Activated B cell treated with CpG ODN at 0.5 μM for 24 hours (primary cell): ENCODE measurements at regions of chr6 and their contacts with region 1.

Region 1: GRCh38 chr6:29355603-29356002 is 13.1 kb downstream of the OR5V1 start:
- DNase-seq: no peak
- ATAC-seq: no peak
- H3K4me3 Mint-ChIP-seq: no peak overlapping the region
- H3K27ac Mint-ChIP-seq: no peak overlapping the region
- H3K4me1 Mint-ChIP-seq: no peaks in the 10 kb centered on the region
- H3K27me3 Mint-ChIP-seq: peaks cover 25% of the 10 kb centered on the region
- CTCF ChIP-seq: no peak

Region 2: DNA sequence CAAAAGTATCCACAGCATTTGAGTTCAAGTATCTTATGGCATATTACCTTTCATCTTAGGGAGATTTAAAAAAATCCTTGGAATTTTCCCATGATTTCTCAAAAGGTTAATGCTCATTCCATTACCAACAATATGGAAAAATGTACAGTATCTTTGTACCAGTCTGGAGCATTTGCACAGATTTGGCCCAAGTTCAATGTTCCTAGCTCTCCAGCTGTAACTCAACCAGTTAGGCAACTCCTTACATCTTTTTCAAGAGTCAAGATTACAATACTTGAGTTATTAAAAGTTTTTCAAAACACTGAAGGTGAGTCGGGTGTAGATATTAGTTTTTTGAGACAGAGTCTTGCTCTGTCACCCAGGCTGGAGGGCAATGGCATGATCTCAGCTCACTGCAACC is 183.9 kb before region 1 on chr6:
- CTCF ChIA-PET with region 1: no interaction called
- POLR2A ChIA-PET with region 1: no interaction called
- intact Hi-C with region 1: no loop called
- DNase-seq: no peak
- ATAC-seq: no peak
- H3K4me3 Mint-ChIP-seq: no peak overlapping the region
- H3K27ac Mint-ChIP-seq: no peak overlapping the region
- H3K4me1 Mint-ChIP-seq: no peaks in the 10 kb centered on the region
- H3K27me3 Mint-ChIP-seq: peaks cover 4% of the 10 kb centered on the region
- CTCF ChIP-seq: no peak

Region 3: GRCh38 chr6:29332672-29333071 is 22.9 kb before region 1 on chr6:
- CTCF ChIA-PET with region 1: no interaction called
- POLR2A ChIA-PET with region 1: no interaction called
- intact Hi-C with region 1: loop called (anchors 1 kb)
- DNase-seq: no peak
- ATAC-seq: no peak
- H3K4me3 Mint-ChIP-seq: no peak overlapping the region
- H3K27ac Mint-ChIP-seq: no peak overlapping the region
- H3K4me1 Mint-ChIP-seq: no peaks in the 10 kb centered on the region
- H3K27me3 Mint-ChIP-seq: peaks cover 17% of the 10 kb centered on the region
- CTCF ChIP-seq: no peak

Region 4: GRCh38 chr6:29447670-29448069 is 92.1 kb after region 1 on chr6:
- CTCF ChIA-PET with region 1: no interaction called
- POLR2A ChIA-PET with region 1: no interaction called
- intact Hi-C with region 1: no loop called
- DNase-seq: no peak
- ATAC-seq: no peak
- H3K4me3 Mint-ChIP-seq: no peak overlapping the region
- H3K27ac Mint-ChIP-seq: no peak overlapping the region
- H3K4me1 Mint-ChIP-seq: no peaks in the 10 kb centered on the region
- H3K27me3 Mint-ChIP-seq: peaks cover 35% of the 10 kb centered on the region
- CTCF ChIP-seq: no peak